ENCODE measurements at regions of chr12 and their contacts with region 1.

Region 1: GRCh38 chr12:7638760-7639555 is 26.8 kb downstream of the APOBEC1 start:
- DNase-seq: peak; percentile 79
- H3K4me3 ChIP-seq: no peak overlapping the region
- H3K27ac ChIP-seq: no peak overlapping the region
- H3K4me1 ChIP-seq: no peaks in the 10 kb centered on the region
- H3K27me3 ChIP-seq: no peaks in the 10 kb centered on the region
- CTCF ChIP-seq: peak; percentile 84

Region 2: DNA sequence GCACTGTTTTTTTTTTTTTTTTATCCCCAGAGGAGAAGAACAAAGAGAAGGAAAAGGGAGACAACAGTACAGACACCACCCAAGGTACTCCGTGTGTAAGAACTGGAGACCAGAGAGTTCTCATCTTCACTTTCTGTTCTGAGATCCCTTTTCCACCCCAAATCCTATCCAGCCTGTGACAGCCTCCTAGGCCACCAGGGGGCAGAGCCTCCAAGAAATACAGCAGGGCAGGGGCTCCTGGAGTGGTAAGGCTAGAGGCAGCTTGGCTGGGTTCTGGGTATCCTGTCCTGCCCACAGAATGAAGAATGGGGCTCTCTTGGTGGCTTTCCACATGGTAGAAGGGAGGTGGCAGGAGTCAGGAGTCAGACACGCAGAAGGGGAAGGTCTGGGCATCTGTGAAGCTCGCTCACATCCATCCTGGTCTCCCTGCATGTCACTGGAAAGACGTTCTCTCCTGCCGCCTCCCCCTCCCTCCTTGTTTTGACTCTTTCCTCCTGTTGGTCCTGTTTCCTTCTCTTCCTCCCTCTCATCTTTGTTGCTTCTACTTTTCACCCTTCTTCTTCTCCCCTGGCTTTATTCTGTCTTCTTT is 496.8 kb before region 1 on chr12:
- intact Hi-C with region 1: loop called (anchors 5 kb)
- DNase-seq: peak; percentile 49
- H3K4me3 ChIP-seq: no peak overlapping the region
- H3K27ac ChIP-seq: no peak overlapping the region
- H3K4me1 ChIP-seq: no peaks in the 10 kb centered on the region
- H3K27me3 ChIP-seq: no peaks in the 10 kb centered on the region
- CTCF ChIP-seq: peak; percentile 49

Region 3: GRCh38 chr12:7219599-7220243 is 419.2 kb before region 1 on chr12:
- intact Hi-C with region 1: loop called (anchors 2 kb)
- DNase-seq: peak; percentile 70
- H3K4me3 ChIP-seq: no peak overlapping the region
- H3K27ac ChIP-seq: no peak overlapping the region
- H3K4me1 ChIP-seq: no peaks in the 10 kb centered on the region
- H3K27me3 ChIP-seq: no peaks in the 10 kb centered on the region
- CTCF ChIP-seq: peak; percentile 77

Region 4: GRCh38 chr12:7806863-7807487 is 168.0 kb after region 1 on chr12:
- intact Hi-C with region 1: loop called (anchors 5 kb)
- DNase-seq: peak; percentile 69
- H3K4me3 ChIP-seq: no peak overlapping the region
- H3K27ac ChIP-seq: no peak overlapping the region
- H3K4me1 ChIP-seq: no peaks in the 10 kb centered on the region
- H3K27me3 ChIP-seq: no peaks in the 10 kb centered on the region
- CTCF ChIP-seq: peak; percentile 81

Region 5: DNA sequence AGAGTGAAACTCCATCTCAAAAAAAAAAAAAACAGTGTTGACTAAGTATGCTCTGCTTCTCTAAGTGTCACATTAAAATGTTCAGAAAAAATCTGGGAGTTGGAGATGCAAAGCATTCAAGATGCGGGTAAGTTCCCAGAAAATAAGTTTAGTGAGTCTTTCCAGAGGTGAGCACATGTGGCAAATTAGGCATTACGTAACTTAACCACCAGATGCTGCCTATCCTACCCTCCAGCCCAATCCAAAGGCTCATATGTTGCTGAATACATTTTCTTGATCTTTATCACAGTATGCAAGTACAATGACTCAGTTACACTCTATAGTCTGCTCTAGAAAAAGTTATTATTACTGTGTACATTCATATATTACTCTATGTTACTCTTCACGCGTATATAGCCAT is 230.2 kb after region 1 on chr12:
- intact Hi-C with region 1: no loop called
- DNase-seq: no peak
- H3K4me3 ChIP-seq: no peak overlapping the region
- H3K27ac ChIP-seq: no peak overlapping the region
- H3K4me1 ChIP-seq: no peaks in the 10 kb centered on the region
- H3K27me3 ChIP-seq: peaks cover 7% of the 10 kb centered on the region
- CTCF ChIP-seq: no peak

Measured in colonic mucosa (tissue), 4 donors.